Gastrocnemius medialis (tissue), 4 donors: ENCODE measurements at regions of chr14 and their contacts with region 1.

Region 1: GRCh38 chr14:70143306-70143705 is 45.4 kb downstream of the SLC8A3 start:
- DNase-seq: no peak
- ATAC-seq: no peak
- H3K4me3 ChIP-seq: no peak overlapping the region
- H3K27ac ChIP-seq: no peak overlapping the region
- H3K4me1 ChIP-seq: peaks cover 1 to 6% of the 10 kb centered on the region in 2 donors
- H3K27me3 ChIP-seq: no peaks in the 10 kb centered on the region
- CTCF ChIP-seq: no peak
- POLR2A ChIP-seq: no peak

Region 2: GRCh38 chr14:70123796-70124195 is 19.5 kb before region 1 on chr14:
- in situ Hi-C with region 1: no loop called
- intact Hi-C with region 1: loop called (anchors 2 kb)
- DNase-seq: no peak
- ATAC-seq: peak in 1 of 2 donors; percentile 23
- H3K4me3 ChIP-seq: no peak overlapping the region
- H3K27ac ChIP-seq: no peak overlapping the region
- H3K4me1 ChIP-seq: peaks cover 1 to 16% of the 10 kb centered on the region in 2 donors
- H3K27me3 ChIP-seq: no peaks in the 10 kb centered on the region
- CTCF ChIP-seq: no peak
- POLR2A ChIP-seq: no peak

Region 3: DNA sequence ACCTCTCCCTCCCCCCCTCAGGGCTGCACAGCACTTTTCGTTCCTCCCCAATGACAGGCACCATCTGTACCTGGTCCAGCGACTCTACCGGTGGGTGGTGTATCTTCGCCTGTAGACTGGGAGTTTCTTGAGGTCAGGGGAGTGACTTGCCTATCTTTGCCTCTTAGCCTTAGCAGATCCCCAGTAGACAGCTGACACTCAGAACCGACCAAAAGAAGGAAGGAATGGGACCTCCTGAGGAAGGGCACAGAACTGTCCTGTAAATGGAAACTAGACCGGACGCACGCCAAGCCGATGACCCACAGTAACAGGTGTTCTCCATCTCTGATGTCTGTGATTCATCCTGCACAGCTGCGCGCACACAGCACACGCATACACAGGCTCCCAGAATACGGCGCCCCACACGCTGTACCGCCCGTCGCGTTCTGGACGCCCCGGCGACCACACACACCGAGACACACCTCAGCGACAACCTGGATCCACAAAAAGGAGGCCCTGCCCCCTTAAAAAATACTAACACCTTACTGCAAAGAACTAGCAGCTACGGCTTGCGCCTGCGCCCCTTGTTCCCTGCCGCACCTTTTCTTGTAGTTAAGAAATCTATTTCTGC is 497.7 kb after region 1 on chr14:
- in situ Hi-C with region 1: no loop called
- intact Hi-C with region 1: no loop called
- DNase-seq: peak; percentile 78 to 91
- ATAC-seq: peak; percentile 93 to 95
- H3K4me3 ChIP-seq: peak overlapping the region; percentile 68 to 78 (median 73)
- H3K27ac ChIP-seq: peak overlapping the region; percentile 84 to 91 (median 88)
- H3K4me1 ChIP-seq: peaks cover 16 to 18% of the 10 kb centered on the region in 2 donors
- H3K27me3 ChIP-seq: peaks cover 0 to 4% (median 0%) of the 10 kb centered on the region in 3 donors
- CTCF ChIP-seq: no peak
- POLR2A ChIP-seq: peak; percentile 66 to 72